Activated CD4-positive, alpha-beta memory T cell treated with anti-CD3 and anti-CD28 coated beads for 36 hours (primary cell): ENCODE measurements at regions of chr21 and their contacts with region 1.

Region 1: GRCh38 chr21:33924079-33924765 is 8.6 kb upstream of the ATP5PO start:
- DNase-seq: peak; percentile 93
- H3K4me3 Mint-ChIP-seq: no peak overlapping the region
- H3K27ac Mint-ChIP-seq: peak overlapping the region; percentile 5
- H3K4me1 Mint-ChIP-seq: peaks cover 10% of the 10 kb centered on the region
- H3K27me3 Mint-ChIP-seq: no peaks in the 10 kb centered on the region

Region 2: GRCh38 chr21:33801424-33802420 is 122.5 kb before region 1 on chr21:
- CTCF ChIA-PET with region 1: no interaction called
- POLR2A ChIA-PET with region 1: no interaction called
- intact Hi-C with region 1: no loop called
- DNase-seq: peak; percentile 11
- H3K4me3 Mint-ChIP-seq: no peak overlapping the region
- H3K27ac Mint-ChIP-seq: no peak overlapping the region
- H3K4me1 Mint-ChIP-seq: no peaks in the 10 kb centered on the region
- H3K27me3 Mint-ChIP-seq: no peaks in the 10 kb centered on the region

Region 3: GRCh38 chr21:33940881-33941245 is 16.6 kb after region 1 on chr21:
- CTCF ChIA-PET with region 1: interaction called, 38 read pairs
- POLR2A ChIA-PET with region 1: interaction called, 6 read pairs
- intact Hi-C with region 1: no loop called
- DNase-seq: no peak
- H3K4me3 Mint-ChIP-seq: no peak overlapping the region
- H3K27ac Mint-ChIP-seq: peak overlapping the region; percentile 75
- H3K4me1 Mint-ChIP-seq: peaks cover 70% of the 10 kb centered on the region
- H3K27me3 Mint-ChIP-seq: no peaks in the 10 kb centered on the region

Region 4: GRCh38 chr21:33976082-33977016 is 52.1 kb after region 1 on chr21:
- CTCF ChIA-PET with region 1: interaction called, 34 read pairs
- POLR2A ChIA-PET with region 1: interaction called, 8 read pairs
- intact Hi-C with region 1: no loop called
- DNase-seq: peak; percentile 79
- H3K4me3 Mint-ChIP-seq: peak overlapping the region; percentile 67
- H3K27ac Mint-ChIP-seq: peak overlapping the region; percentile 100
- H3K4me1 Mint-ChIP-seq: peaks cover 69% of the 10 kb centered on the region
- H3K27me3 Mint-ChIP-seq: no peaks in the 10 kb centered on the region

Region 5: DNA sequence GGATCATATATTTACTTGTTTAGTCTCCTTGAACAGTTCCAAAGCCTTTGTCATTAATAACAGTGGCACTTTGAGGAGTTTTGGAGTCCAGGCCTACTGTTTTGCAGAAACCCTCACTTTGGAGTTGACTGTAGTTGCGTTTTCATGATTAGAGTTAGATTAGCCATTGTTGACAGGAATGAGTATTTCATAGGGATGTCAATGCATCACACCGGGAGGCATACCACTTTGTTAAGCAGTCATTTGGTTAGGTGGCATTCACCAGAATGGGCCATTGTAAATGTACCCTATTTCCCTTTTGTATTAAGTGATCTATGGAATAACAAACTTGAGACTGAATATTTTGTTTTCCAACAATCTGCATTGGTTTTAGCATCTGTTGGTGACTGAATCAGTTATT is 160.9 kb after region 1 on chr21:
- CTCF ChIA-PET with region 1: interaction called, 38 read pairs
- POLR2A ChIA-PET with region 1: interaction called, 3 read pairs
- intact Hi-C with region 1: no loop called
- DNase-seq: no peak
- H3K4me3 Mint-ChIP-seq: no peak overlapping the region
- H3K27ac Mint-ChIP-seq: no peak overlapping the region
- H3K4me1 Mint-ChIP-seq: peaks cover 60% of the 10 kb centered on the region
- H3K27me3 Mint-ChIP-seq: no peaks in the 10 kb centered on the region

Region 6: DNA sequence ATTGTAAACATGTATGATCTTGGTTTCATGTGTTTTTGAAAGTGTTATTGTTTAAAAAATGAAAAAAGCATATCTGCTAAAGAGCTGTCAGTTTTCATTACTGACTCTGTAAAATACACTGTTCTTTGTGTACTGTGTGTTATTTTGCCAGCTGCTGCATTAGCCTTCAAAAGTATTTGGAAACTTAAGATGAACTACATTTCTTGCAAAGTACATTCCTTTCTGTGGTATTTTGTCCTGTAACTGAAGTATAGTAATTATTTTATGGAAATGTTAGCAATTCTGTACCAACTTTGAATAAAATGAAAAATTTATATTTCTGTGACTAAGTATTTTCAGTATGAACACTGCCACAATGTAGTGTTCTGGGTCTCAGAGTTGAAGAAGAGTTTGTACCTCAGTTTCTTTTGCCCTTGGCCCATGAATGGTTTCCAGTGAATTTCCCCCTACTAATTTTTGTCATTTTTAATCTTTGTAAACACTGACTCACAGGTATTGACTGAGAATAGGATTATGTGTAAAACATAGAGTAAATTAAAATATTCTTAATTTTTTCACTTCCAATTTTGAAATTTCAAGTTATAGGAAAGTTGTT is 181.8 kb after region 1 on chr21:
- CTCF ChIA-PET with region 1: interaction called, 21 read pairs
- POLR2A ChIA-PET with region 1: no interaction called
- intact Hi-C with region 1: no loop called
- DNase-seq: no peak
- H3K4me3 Mint-ChIP-seq: no peak overlapping the region
- H3K27ac Mint-ChIP-seq: peak overlapping the region; percentile 74
- H3K4me1 Mint-ChIP-seq: peaks cover 85% of the 10 kb centered on the region
- H3K27me3 Mint-ChIP-seq: no peaks in the 10 kb centered on the region

Region 7: GRCh38 chr21:34243562-34243961 is 319.3 kb after region 1 on chr21:
- CTCF ChIA-PET with region 1: interaction called, 22 read pairs
- POLR2A ChIA-PET with region 1: no interaction called
- intact Hi-C with region 1: loop called (anchors 2 kb)
- DNase-seq: peak; percentile 47
- H3K4me3 Mint-ChIP-seq: no peak overlapping the region
- H3K27ac Mint-ChIP-seq: no peak overlapping the region
- H3K4me1 Mint-ChIP-seq: no peaks in the 10 kb centered on the region
- H3K27me3 Mint-ChIP-seq: no peaks in the 10 kb centered on the region